CD4-positive, alpha-beta T cell (primary cell): ENCODE measurements at regions of chr20 and their contacts with region 1.

Region 1: GRCh38 chr20:3115190-3116107 is 30.9 kb upstream of the AVP start:
- DNase-seq: peak in 6 of 14 experiments; percentile 18 to 74 (median 36)
- ATAC-seq: peak; percentile 58
- H3K4me3 ChIP-seq: no peak overlapping the region
- H3K4me3 Mint-ChIP-seq: no peak overlapping the region
- H3K27ac ChIP-seq: no peak overlapping the region
- H3K27ac Mint-ChIP-seq: peak overlapping the region; percentile 22
- H3K4me1 ChIP-seq: peaks cover 23% of the 10 kb centered on the region
- H3K4me1 Mint-ChIP-seq: peaks cover 21% of the 10 kb centered on the region
- H3K27me3 ChIP-seq: no peaks in the 10 kb centered on the region
- H3K27me3 Mint-ChIP-seq: no peaks in the 10 kb centered on the region
- CTCF ChIP-seq: peak; percentile 87

Region 2: GRCh38 chr20:3021327-3021726 is 94.1 kb before region 1 on chr20:
- CTCF ChIA-PET with region 1: no interaction called
- POLR2A ChIA-PET with region 1: no interaction called
- intact Hi-C with region 1: no loop called
- DNase-seq: no peak
- ATAC-seq: no peak
- H3K4me3 ChIP-seq: no peak overlapping the region
- H3K4me3 Mint-ChIP-seq: no peak overlapping the region
- H3K27ac ChIP-seq: no peak overlapping the region
- H3K27ac Mint-ChIP-seq: no peak overlapping the region
- H3K4me1 ChIP-seq: no peaks in the 10 kb centered on the region
- H3K4me1 Mint-ChIP-seq: no peaks in the 10 kb centered on the region
- H3K27me3 ChIP-seq: no peaks in the 10 kb centered on the region
- H3K27me3 Mint-ChIP-seq: no peaks in the 10 kb centered on the region
- CTCF ChIP-seq: no peak

Region 3: GRCh38 chr20:3051385-3052019 is 63.9 kb before region 1 on chr20:
- CTCF ChIA-PET with region 1: interaction called, 21 read pairs
- POLR2A ChIA-PET with region 1: no interaction called
- intact Hi-C with region 1: loop called (anchors 1 kb)
- DNase-seq: no peak
- ATAC-seq: peak; percentile 47
- H3K4me3 ChIP-seq: no peak overlapping the region
- H3K4me3 Mint-ChIP-seq: no peak overlapping the region
- H3K27ac ChIP-seq: no peak overlapping the region
- H3K27ac Mint-ChIP-seq: no peak overlapping the region
- H3K4me1 ChIP-seq: peaks cover 18% of the 10 kb centered on the region
- H3K4me1 Mint-ChIP-seq: peaks cover 18% of the 10 kb centered on the region
- H3K27me3 ChIP-seq: no peaks in the 10 kb centered on the region
- H3K27me3 Mint-ChIP-seq: no peaks in the 10 kb centered on the region
- CTCF ChIP-seq: no peak

Region 4: DNA sequence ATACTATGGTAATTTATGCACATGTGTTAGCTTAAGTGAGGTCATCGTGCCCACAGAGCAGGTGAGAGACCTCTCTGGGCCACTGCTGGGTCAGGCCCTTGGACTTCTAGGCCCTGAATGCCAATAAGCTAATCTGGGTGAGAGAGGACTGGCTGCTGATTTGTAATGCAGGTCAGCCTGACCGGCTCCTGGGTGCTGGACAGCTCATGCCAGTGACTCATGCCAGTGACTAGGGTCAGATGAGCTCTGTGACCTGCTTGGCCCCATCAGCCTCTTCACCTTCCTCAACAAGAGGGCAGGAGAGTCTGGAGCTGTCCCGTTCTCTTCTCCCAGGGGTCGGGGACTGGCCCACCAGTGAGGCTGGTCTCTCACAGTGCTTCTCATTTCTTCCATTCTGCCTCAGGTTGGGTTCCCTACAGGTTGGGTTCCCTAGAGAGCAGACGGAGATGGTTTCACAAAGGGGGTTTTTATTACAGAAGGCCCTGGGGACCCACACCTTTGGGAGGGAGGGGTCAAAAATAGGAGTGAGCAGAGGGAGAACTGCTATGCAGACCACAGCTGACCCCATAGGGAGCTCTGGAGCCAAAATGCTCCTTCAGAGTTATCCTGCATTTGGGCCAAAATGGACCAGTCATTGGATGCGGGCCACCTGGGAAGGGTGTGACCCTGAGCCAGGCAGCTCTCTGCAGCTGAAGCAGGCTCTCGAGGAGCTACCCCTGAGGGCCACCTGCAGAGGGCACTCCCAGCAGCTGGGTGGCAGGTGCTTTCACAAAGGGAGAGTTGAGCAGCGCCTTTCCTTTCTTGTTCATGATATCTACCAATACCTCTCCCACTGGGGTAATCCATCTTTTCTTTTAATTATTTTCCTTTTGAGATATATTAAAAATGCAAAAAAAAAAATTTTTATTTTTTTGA is 46.2 kb before region 1 on chr20:
- CTCF ChIA-PET with region 1: interaction called, 5 read pairs
- POLR2A ChIA-PET with region 1: interaction called, 4 read pairs
- intact Hi-C with region 1: loop called (anchors 1 to 2 kb)
- DNase-seq: peak in 11 of 14 experiments; percentile 35 to 70 (median 55)
- ATAC-seq: peak; percentile 59
- H3K4me3 ChIP-seq: no peak overlapping the region
- H3K4me3 Mint-ChIP-seq: peak overlapping the region; percentile 45
- H3K27ac ChIP-seq: no peak overlapping the region
- H3K27ac Mint-ChIP-seq: no peak overlapping the region
- H3K4me1 ChIP-seq: peaks cover 24% of the 10 kb centered on the region
- H3K4me1 Mint-ChIP-seq: peaks cover 36% of the 10 kb centered on the region
- H3K27me3 ChIP-seq: no peaks in the 10 kb centered on the region
- H3K27me3 Mint-ChIP-seq: no peaks in the 10 kb centered on the region
- CTCF ChIP-seq: peak; percentile 28

Region 5: DNA sequence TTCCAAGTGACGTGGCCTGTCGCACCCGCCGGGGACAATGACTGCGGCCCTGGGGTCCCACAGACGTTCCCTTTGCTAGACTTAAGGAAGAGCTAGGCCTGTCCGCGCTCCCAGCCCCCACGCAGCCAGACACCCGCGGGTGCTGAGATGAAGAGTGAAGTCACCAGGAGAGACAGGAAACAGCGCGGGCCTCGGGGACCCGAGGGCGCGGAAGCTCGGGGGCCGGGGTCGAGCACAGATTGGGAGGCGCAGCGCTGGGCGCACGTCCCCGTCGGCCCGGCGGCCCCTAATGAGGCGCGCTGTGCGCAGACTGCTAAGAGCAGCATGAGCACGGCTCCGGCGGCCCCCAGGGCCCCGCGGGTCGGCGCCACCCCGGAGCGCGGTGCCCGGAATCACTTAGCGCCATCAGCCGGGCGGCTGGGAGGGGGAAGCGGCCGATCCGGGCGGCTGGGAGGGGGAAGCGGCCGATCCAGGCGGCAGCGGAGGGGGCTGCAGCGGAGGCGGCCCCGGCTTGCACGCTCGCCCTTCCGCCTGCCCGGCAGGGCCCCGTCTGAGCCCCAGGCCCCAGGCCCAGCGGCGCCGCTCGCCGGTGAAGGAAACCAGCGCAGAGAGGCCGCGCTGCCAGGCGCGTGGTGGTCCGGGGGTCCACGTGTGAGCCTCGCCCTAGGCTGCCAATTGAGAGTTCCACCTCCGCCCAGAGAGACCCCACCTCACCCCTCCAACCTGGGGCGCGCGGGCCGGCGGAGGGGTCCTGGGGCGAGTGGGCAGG is 22.7 kb before region 1 on chr20:
- CTCF ChIA-PET with region 1: interaction called, 5 read pairs
- POLR2A ChIA-PET with region 1: interaction called, 3 read pairs
- intact Hi-C with region 1: loop called in 1 of 2 experiments (anchors 2 kb)
- DNase-seq: peak; percentile 25 to 70 (median 52)
- ATAC-seq: peak; percentile 21
- H3K4me3 ChIP-seq: peak overlapping the region; percentile 47
- H3K4me3 Mint-ChIP-seq: peak overlapping the region; percentile 95
- H3K27ac ChIP-seq: peak overlapping the region; percentile 76 to 86
- H3K27ac Mint-ChIP-seq: peak overlapping the region; percentile 100
- H3K4me1 ChIP-seq: peaks cover 26% of the 10 kb centered on the region
- H3K4me1 Mint-ChIP-seq: peaks cover 40% of the 10 kb centered on the region
- H3K27me3 ChIP-seq: peaks cover 0 to 11% of the 10 kb centered on the region in 2 experiments
- H3K27me3 Mint-ChIP-seq: peaks cover 8% of the 10 kb centered on the region
- CTCF ChIP-seq: no peak

Region 6: GRCh38 chr20:3156811-3157619 is 41.6 kb after region 1 on chr20:
- CTCF ChIA-PET with region 1: interaction called, 4 read pairs
- POLR2A ChIA-PET with region 1: no interaction called
- intact Hi-C with region 1: loop called in 1 of 2 experiments (anchors 5 kb)
- DNase-seq: peak in 4 of 14 experiments; percentile 30 to 71 (median 61)
- ATAC-seq: peak; percentile 85
- H3K4me3 ChIP-seq: peak overlapping the region; percentile 97
- H3K4me3 Mint-ChIP-seq: peak overlapping the region; percentile 87
- H3K27ac ChIP-seq: peak overlapping the region; percentile 47 to 48
- H3K27ac Mint-ChIP-seq: peak overlapping the region; percentile 94
- H3K4me1 ChIP-seq: peaks cover 46% of the 10 kb centered on the region
- H3K4me1 Mint-ChIP-seq: peaks cover 75% of the 10 kb centered on the region
- H3K27me3 ChIP-seq: no peaks in the 10 kb centered on the region
- H3K27me3 Mint-ChIP-seq: no peaks in the 10 kb centered on the region
- CTCF ChIP-seq: no peak

Region 7: DNA sequence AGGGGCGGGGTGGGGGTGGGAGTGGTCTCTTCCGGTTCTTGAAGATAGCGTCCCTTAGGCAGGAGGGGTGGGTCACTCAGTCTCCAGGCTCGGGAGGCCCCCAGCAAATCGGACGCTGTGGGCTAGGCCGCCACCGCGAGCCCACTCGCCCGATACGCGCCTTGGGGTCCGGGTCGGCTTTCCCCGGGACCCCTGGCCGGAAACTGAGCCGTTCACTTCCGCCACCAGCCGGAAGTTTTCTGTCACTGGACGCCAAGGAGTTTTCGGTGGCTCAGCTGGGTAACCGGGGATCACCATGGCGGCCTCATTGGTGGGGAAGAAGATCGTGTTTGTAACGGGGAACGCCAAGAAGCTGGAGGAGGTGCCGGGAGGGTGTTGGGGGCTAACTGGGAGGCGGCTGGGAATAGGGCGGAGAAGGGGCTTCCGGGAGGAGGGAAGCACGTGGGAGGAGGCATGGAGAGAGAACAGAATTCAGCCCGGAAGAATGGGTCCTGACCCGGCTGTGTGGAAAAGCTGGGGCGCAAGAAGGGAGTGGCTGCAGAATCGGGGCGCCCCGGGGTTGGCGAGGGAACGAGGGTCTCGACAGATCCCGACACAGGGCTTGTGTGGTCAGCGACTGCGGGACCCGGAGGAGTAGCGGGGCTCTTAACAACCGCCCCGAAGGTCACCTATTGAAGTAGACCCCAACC is 94.0 kb after region 1 on chr20 and contains the start of gene ITPA:
- CTCF ChIA-PET with region 1: interaction called, 5 read pairs
- POLR2A ChIA-PET with region 1: no interaction called
- intact Hi-C with region 1: loop called in 1 of 2 experiments (anchors 5 kb)
- DNase-seq: peak; percentile 27 to 74 (median 50)
- ATAC-seq: peak; percentile 25
- H3K4me3 ChIP-seq: peak within 1 kb of the TSS; percentile 99
- H3K4me3 Mint-ChIP-seq: peak within 1 kb of the TSS; percentile 96
- H3K27ac ChIP-seq: peak within 1 kb of the TSS; percentile 73 to 89
- H3K27ac Mint-ChIP-seq: peak within 1 kb of the TSS; percentile 83
- H3K4me1 ChIP-seq: peaks cover 32% of the 10 kb centered on the region
- H3K4me1 Mint-ChIP-seq: peaks cover 30% of the 10 kb centered on the region
- H3K27me3 ChIP-seq: no peaks in the 10 kb centered on the region
- H3K27me3 Mint-ChIP-seq: no peaks in the 10 kb centered on the region
- CTCF ChIP-seq: no peak
- total RNA-seq, gene ITPA: 17.8 to 19.5 TPM

Region 8: DNA sequence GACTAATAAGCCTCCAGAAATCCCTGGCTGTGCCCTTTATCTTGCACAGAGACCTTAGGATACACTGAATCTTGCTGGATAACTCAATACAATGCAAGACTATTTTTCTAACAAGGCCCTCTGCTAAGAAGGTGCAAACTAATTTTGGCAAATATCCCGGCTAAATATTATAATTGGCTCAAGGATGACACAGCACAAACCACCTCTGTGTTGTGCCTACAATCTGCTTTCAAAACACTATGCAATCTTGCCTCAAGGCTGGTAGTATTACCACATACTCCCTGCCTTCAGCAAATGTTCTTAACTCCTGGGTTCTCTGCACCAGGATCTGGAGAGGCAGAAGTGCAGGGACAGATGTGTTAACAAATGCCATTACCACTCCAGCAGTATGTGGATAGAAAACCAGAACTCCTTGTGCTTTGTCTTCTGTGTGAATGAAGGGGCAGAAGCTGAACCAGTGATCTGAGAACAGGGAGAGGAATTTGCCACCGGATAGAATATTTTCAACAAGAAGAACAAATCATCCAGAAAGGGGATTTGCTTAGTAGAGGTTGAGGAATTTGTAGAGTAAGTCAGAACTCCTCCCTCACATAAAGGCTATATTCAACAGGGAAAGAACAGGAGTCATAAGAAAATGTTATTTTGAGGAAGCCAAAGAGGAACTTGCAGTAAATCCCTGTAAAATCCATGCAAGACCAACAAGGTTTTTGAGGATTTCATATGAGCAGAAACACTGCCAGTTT is 197.7 kb after region 1 on chr20:
- CTCF ChIA-PET with region 1: no interaction called
- POLR2A ChIA-PET with region 1: no interaction called
- intact Hi-C with region 1: loop called (anchors 1 to 2 kb)
- DNase-seq: no peak
- ATAC-seq: no peak
- H3K4me3 ChIP-seq: no peak overlapping the region
- H3K4me3 Mint-ChIP-seq: no peak overlapping the region
- H3K27ac ChIP-seq: no peak overlapping the region
- H3K27ac Mint-ChIP-seq: no peak overlapping the region
- H3K4me1 ChIP-seq: no peaks in the 10 kb centered on the region
- H3K4me1 Mint-ChIP-seq: no peaks in the 10 kb centered on the region
- H3K27me3 ChIP-seq: no peaks in the 10 kb centered on the region
- H3K27me3 Mint-ChIP-seq: no peaks in the 10 kb centered on the region
- CTCF ChIP-seq: no peak